Mammary epithelial cell (primary cell): ENCODE measurements at regions of chr2 and their contacts with region 1.

Region 1: GRCh38 chr2:172465417-172466334 is 38.3 kb downstream of the ITGA6 start:
- DNase-seq: peak; percentile 76
- H3K4me3 ChIP-seq: no peak overlapping the region
- H3K27ac ChIP-seq: peak overlapping the region; percentile 85
- H3K4me1 ChIP-seq: peaks cover 54% of the 10 kb centered on the region
- H3K27me3 ChIP-seq: no peaks in the 10 kb centered on the region
- CTCF ChIP-seq: peak; percentile 84 to 95

Region 2: GRCh38 chr2:171574149-171574795 is 891.4 kb before region 1 on chr2:
- CTCF ChIA-PET with region 1: no interaction called
- dilution Hi-C with region 1: no loop called
- in situ Hi-C with region 1: no loop called
- intact Hi-C with region 1: loop called (anchors 10 kb)
- DNase-seq: peak; percentile 66
- H3K4me3 ChIP-seq: no peak overlapping the region
- H3K27ac ChIP-seq: no peak overlapping the region
- H3K4me1 ChIP-seq: no peaks in the 10 kb centered on the region
- H3K27me3 ChIP-seq: no peaks in the 10 kb centered on the region
- CTCF ChIP-seq: peak; percentile 95 to 97

Region 3: DNA sequence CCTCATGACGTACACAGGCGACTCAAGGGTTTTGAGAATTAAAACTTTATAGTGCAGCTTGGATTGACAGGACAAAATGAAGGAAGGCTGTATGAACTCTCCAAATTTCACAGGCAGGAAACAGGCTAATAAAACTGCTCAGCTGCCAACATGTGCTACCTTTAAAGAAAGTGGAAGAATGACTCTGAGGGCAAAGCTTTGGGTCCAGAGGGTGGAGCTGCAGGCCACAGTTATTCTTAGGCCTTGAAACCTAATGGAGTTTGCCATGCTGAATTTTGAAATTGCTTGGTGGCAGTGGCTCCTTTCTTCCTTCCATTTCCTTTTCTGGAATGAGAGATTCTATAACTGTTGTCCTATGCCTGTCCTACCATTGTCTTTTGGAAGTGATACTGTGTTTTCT is 508.6 kb before region 1 on chr2:
- CTCF ChIA-PET with region 1: no interaction called
- dilution Hi-C with region 1: no loop called
- in situ Hi-C with region 1: no loop called
- intact Hi-C with region 1: loop called (anchors 10 kb)
- DNase-seq: peak; percentile 14
- H3K4me3 ChIP-seq: no peak overlapping the region
- H3K27ac ChIP-seq: no peak overlapping the region
- H3K4me1 ChIP-seq: peaks cover 10% of the 10 kb centered on the region
- H3K27me3 ChIP-seq: no peaks in the 10 kb centered on the region
- CTCF ChIP-seq: peak in 1 of 2 donors; percentile 45

Region 4: GRCh38 chr2:172200495-172201085 is 265.1 kb before region 1 on chr2:
- CTCF ChIA-PET with region 1: no interaction called
- dilution Hi-C with region 1: no loop called
- in situ Hi-C with region 1: no loop called
- intact Hi-C with region 1: loop called (anchors 1 kb)
- DNase-seq: peak; percentile 47
- H3K4me3 ChIP-seq: no peak overlapping the region
- H3K27ac ChIP-seq: no peak overlapping the region
- H3K4me1 ChIP-seq: peaks cover 35% of the 10 kb centered on the region
- H3K27me3 ChIP-seq: no peaks in the 10 kb centered on the region
- CTCF ChIP-seq: peak; percentile 67 to 76

Region 5: DNA sequence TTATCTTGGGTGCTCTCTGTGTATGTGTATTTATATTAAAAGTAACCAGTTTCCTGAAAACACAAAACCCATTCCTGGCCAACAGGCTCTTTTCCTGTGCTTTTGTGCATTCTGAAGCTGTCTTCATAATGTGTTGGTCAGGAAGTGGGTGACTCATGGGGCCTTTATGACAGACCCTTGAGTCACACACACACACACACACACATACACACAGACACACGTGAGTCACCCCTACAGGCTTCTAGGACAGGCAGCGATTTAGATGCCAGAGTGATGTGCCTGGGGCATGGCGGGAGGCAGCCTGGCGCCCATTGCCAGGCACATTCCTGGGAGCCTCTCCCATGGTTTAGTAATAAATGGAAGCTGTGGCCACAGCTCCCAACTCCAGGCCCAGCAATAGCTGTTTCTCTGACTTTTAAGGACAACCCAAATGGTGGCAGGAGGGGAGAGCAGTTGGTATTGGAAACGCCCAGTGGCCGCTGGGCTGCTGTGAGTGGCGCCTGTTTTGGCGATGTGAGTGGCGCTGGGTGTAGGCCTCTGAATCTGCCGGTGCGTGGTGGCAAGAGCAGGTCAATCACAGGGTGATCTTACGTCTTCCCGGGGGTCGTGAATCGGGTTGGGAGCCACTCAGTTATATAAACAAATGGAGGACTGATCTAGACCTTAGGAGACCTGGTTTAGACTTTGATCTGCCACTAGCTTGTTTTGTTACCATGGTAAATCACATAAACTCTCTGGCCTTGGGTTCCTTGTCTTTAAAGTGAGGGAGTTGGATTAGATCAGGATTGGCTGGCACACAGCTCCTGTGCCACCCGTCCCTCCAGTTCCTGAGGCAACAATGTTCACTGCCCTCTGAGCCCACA is 212.3 kb before region 1 on chr2:
- CTCF ChIA-PET with region 1: interaction called, 3 read pairs
- dilution Hi-C with region 1: no loop called
- in situ Hi-C with region 1: no loop called
- intact Hi-C with region 1: loop called (anchors 1 kb)
- DNase-seq: peak; percentile 99
- H3K4me3 ChIP-seq: no peak overlapping the region
- H3K27ac ChIP-seq: peak overlapping the region; percentile 94
- H3K4me1 ChIP-seq: peaks cover 57% of the 10 kb centered on the region
- H3K27me3 ChIP-seq: no peaks in the 10 kb centered on the region
- CTCF ChIP-seq: no peak

Region 6: GRCh38 chr2:172404824-172405223 is 60.9 kb before region 1 on chr2:
- CTCF ChIA-PET with region 1: interaction called, 3 read pairs
- dilution Hi-C with region 1: no loop called
- in situ Hi-C with region 1: no loop called
- intact Hi-C with region 1: loop called (anchors 2 kb)
- DNase-seq: peak; percentile 82
- H3K4me3 ChIP-seq: no peak overlapping the region
- H3K27ac ChIP-seq: peak overlapping the region; percentile 52
- H3K4me1 ChIP-seq: peaks cover 60% of the 10 kb centered on the region
- H3K27me3 ChIP-seq: no peaks in the 10 kb centered on the region
- CTCF ChIP-seq: no peak

Region 7: GRCh38 chr2:172623249-172623965 is 157.7 kb after region 1 on chr2:
- CTCF ChIA-PET with region 1: no interaction called
- dilution Hi-C with region 1: no loop called
- in situ Hi-C with region 1: no loop called
- intact Hi-C with region 1: no loop called
- DNase-seq: no peak
- H3K4me3 ChIP-seq: no peak overlapping the region
- H3K27ac ChIP-seq: no peak overlapping the region
- H3K4me1 ChIP-seq: no peaks in the 10 kb centered on the region
- H3K27me3 ChIP-seq: no peaks in the 10 kb centered on the region
- CTCF ChIP-seq: no peak

Region 8: DNA sequence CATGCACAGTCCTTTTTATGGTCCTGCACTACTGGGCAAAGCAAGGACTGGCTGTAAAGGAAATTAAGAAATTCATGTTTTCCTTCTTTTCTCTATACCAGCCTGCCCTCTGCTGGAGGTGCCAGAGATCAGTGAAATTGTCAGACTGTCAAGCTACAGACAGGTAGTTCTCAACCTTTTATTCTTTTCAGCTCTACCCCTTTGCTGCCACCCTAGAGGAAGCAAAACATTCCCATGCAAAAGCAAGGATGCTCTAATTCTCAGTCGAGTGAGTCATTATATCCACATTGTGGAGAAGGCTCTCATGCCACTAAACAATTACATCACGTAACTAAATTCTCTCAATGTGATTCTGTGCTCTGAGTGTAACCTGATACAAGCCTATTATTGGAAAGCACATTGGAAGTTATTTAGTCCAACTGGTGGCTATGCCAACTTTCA is 244.9 kb after region 1 on chr2:
- CTCF ChIA-PET with region 1: no interaction called
- dilution Hi-C with region 1: no loop called
- in situ Hi-C with region 1: no loop called
- intact Hi-C with region 1: loop called (anchors 2 kb)
- DNase-seq: peak; percentile 94
- H3K4me3 ChIP-seq: no peak overlapping the region
- H3K27ac ChIP-seq: no peak overlapping the region
- H3K4me1 ChIP-seq: peaks cover 6% of the 10 kb centered on the region
- H3K27me3 ChIP-seq: no peaks in the 10 kb centered on the region
- CTCF ChIP-seq: peak; percentile 78 to 84